Cardiac septum (tissue), 1 donor: ENCODE measurements at regions of chr13 and their contacts with region 1.

Region 1: GRCh38 chr13:32175307-32175706 is 139.9 kb downstream of the ZAR1L start:
- DNase-seq: no peak

Region 2: GRCh38 chr13:32187651-32188050 is 12.3 kb after region 1 on chr13:
- intact Hi-C with region 1: loop called (anchors 1 kb)
- DNase-seq: no peak

Region 3: DNA sequence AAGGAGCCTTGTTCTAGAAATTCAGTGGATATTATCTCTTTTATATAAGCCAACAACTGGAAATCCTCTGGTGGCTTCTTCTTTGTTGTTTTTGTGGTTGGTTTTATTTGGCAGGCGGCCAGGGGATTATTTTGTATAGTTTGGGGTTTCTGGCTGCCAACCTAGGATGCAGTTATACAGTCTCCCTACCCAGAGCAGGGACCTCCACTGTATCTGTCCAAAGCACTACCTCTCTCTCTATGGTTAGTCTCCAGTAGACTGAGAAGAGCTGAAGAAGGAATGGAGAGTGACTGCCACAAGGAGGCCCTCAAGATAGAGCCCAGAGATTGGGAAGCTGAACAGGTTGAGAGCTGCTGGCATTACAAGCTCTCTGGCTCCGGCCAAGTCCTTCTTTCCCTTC is 59.6 kb after region 1 on chr13:
- intact Hi-C with region 1: loop called (anchors 10 kb)
- DNase-seq: no peak